WTC11 (cell line): ENCODE measurements at regions of chr9 and their contacts with region 1.

Region 1: GRCh38 chr9:77879410-77879943 is 152.1 kb downstream of the GNAQ start:
- DNase-seq: no peak
- ATAC-seq: no peak
- H3K4me3 Mint-ChIP-seq: no peak overlapping the region
- H3K27ac Mint-ChIP-seq: no peak overlapping the region
- H3K4me1 Mint-ChIP-seq: peaks cover 34% of the 10 kb centered on the region
- H3K27me3 Mint-ChIP-seq: no peaks in the 10 kb centered on the region
- CTCF ChIP-seq: no peak

Region 2: GRCh38 chr9:77865385-77866047 is 14.0 kb before region 1 on chr9:
- CTCF ChIA-PET with region 1: no interaction called
- POLR2A ChIA-PET with region 1: interaction called, 11 read pairs
- DNase-seq: no peak
- ATAC-seq: no peak
- H3K4me3 Mint-ChIP-seq: no peak overlapping the region
- H3K27ac Mint-ChIP-seq: no peak overlapping the region; the same call in 1 of the 2 replicates
- H3K4me1 Mint-ChIP-seq: no peaks in the 10 kb centered on the region
- H3K27me3 Mint-ChIP-seq: peaks cover 5% of the 10 kb centered on the region
- CTCF ChIP-seq: no peak